Mammary epithelial cell (primary cell): ENCODE measurements at regions of chr7 and their contacts with region 1.

Region 1: DNA sequence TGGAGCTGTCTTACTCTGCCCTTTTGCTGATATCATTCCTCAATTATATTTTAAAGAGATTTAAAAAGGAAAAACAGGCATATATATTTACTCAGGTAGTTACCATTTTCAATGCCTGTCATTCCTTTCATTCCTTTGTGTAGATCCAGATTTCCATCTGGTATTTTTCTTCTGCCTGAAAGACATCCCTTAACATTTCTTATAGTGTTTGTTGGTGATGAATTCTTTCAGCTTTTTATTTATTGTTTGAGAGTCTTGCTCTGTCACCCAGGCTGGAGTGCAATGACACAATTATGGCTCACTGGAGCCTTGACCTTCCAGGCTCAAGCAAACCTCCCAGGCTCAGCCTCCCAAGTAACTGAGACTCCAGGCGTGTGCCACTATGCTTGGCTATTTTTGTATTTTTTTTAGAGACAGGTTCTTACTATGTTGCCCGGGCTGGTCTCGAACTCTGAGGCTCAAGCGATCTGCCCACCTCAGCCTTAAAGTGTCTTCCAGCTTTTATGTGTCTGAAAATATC is 5.6 kb upstream of the POM121 start:
- DNase-seq: no peak
- H3K4me3 ChIP-seq: no peak overlapping the region
- H3K27ac ChIP-seq: no peak overlapping the region
- H3K4me1 ChIP-seq: no peaks in the 10 kb centered on the region
- H3K27me3 ChIP-seq: no peaks in the 10 kb centered on the region
- CTCF ChIP-seq: no peak

Region 2: GRCh38 chr7:71612911-71613310 is 1306.4 kb before region 1 on chr7:
- CTCF ChIA-PET with region 1: no interaction called
- dilution Hi-C with region 1: no loop called
- in situ Hi-C with region 1: no loop called
- intact Hi-C with region 1: no loop called
- DNase-seq: no peak
- H3K4me3 ChIP-seq: no peak overlapping the region
- H3K27ac ChIP-seq: no peak overlapping the region
- H3K4me1 ChIP-seq: no peaks in the 10 kb centered on the region
- H3K27me3 ChIP-seq: no peaks in the 10 kb centered on the region
- CTCF ChIP-seq: no peak

Region 3: DNA sequence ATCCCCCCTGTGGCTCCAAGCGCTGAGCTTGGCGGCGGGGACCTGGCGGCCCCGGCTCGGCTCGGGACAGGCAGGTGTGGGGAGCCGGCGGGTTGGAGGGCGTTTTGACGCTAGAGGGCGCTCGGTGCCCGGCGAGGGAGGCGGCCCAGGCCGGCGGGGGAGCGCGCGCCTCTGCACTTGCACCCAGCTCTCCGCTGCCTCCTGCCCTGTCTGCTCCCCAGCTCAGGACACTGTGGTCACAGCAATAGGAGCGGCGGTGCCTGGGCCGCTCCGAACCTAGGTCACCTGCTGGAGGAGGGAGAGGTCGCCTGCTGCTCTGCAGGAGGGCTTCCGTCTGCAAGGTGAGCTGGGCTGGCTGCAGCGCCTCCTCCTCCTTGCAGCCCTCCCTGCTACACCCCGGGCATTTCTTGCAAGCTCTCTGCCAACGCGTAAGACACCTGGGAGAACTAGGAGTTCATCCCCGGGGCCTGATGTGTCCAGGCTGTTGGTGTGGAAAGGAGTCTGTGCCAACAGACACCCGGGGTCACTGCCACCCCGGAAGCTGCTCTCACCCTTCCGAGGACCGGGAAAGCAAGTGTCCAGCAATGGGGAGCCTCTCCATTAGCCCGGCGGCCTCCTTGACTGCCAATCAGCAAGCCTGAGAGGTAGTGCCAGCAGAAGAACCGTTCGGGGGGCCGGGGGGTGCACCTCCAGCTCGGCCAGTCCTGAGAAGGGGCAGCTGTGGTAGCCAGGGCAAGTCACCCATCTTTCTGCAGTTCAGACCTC is 1167.0 kb before region 1 on chr7:
- CTCF ChIA-PET with region 1: no interaction called
- dilution Hi-C with region 1: no loop called
- in situ Hi-C with region 1: no loop called
- intact Hi-C with region 1: loop called (anchors 5 kb)
- DNase-seq: peak; percentile 5
- H3K4me3 ChIP-seq: no peak overlapping the region
- H3K27ac ChIP-seq: no peak overlapping the region
- H3K4me1 ChIP-seq: no peaks in the 10 kb centered on the region
- H3K27me3 ChIP-seq: no peaks in the 10 kb centered on the region
- CTCF ChIP-seq: peak; percentile 13 to 53

Region 4: GRCh38 chr7:72286519-72286918 is 632.8 kb before region 1 on chr7:
- CTCF ChIA-PET with region 1: no interaction called
- dilution Hi-C with region 1: no loop called
- in situ Hi-C with region 1: no loop called
- intact Hi-C with region 1: no loop called
- DNase-seq: no peak
- H3K4me3 ChIP-seq: no peak overlapping the region
- H3K27ac ChIP-seq: no peak overlapping the region
- H3K4me1 ChIP-seq: no peaks in the 10 kb centered on the region
- H3K27me3 ChIP-seq: no peaks in the 10 kb centered on the region
- CTCF ChIP-seq: no peak